ENCODE measurements at regions of chr2 and their contacts with region 1.

Region 1: GRCh38 chr2:140122001-140122400 is 1341.8 kb upstream of the NXPH2 start:
- DNase-seq: no peak

Region 2: DNA sequence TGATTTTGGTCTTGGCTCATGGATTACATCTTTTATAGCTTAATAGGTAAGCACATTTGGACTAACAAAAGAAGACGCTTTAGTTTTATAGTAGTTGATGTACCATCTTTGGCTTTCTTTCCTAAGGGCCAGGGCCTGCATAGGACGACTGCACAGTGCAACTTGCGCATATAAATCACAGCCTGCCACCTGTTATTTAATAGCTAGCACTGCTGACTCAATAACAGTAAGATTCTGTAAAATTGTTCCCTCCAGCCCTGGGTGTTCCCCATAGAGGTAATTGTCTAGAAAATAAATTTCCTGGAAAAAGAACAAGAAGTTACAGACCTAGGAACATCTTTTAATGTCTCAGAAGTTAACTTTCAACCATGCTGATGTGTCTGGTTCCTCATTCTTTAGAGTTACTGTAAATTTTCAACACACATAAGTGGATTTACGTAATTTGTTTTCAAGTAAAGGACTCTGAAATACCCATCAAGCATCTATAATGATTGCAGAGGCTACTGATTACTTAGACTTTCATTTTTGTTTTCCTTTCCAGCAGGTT is 747.6 kb before region 1 on chr2:
- intact Hi-C with region 1: no loop called
- DNase-seq: no peak

Region 3: DNA sequence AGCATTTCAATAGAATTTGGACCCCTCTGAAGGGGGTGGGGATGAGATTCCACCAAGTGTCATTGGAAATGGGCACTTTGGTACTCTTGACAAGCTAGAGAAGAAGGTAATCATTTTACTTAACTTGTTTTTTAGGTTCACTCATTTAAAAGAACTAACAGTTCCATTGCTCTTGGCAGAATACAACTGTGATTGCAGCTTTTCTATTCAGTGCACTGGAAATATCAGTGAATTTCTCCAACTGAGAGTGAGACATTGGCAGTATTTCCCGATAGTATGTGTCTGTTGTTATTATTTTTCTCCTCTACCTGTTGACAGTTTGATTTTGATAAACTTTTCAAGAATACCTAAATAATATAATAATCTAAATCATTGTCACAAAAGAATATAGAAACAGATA is 14.9 kb after region 1 on chr2:
- intact Hi-C with region 1: loop called in 1 of 2 experiments (anchors 2 kb)
- DNase-seq: no peak

Region 4: GRCh38 chr2:140567734-140568133 is 445.7 kb after region 1 on chr2:
- intact Hi-C with region 1: no loop called
- DNase-seq: no peak

Measured in posterior vena cava (tissue), 2 donors.